Activated CD4-positive, alpha-beta memory T cell treated with anti-CD3 and anti-CD28 coated beads, Interleukin-2, amount 10 ng/mL, durations not matched to agents 7 days and 5 days (primary cell): ENCODE measurements at regions of chr19 and their contacts with region 1.

Region 1: GRCh38 chr19:18328340-18329034 is 5.6 kb upstream of the LSM4 start:
- DNase-seq: peak; percentile 92
- H3K4me3 Mint-ChIP-seq: peak overlapping the region; percentile 47
- H3K27ac Mint-ChIP-seq: peak overlapping the region; percentile 48
- H3K4me1 Mint-ChIP-seq: peaks cover 22% of the 10 kb centered on the region
- H3K27me3 Mint-ChIP-seq: no peaks in the 10 kb centered on the region

Region 2: DNA sequence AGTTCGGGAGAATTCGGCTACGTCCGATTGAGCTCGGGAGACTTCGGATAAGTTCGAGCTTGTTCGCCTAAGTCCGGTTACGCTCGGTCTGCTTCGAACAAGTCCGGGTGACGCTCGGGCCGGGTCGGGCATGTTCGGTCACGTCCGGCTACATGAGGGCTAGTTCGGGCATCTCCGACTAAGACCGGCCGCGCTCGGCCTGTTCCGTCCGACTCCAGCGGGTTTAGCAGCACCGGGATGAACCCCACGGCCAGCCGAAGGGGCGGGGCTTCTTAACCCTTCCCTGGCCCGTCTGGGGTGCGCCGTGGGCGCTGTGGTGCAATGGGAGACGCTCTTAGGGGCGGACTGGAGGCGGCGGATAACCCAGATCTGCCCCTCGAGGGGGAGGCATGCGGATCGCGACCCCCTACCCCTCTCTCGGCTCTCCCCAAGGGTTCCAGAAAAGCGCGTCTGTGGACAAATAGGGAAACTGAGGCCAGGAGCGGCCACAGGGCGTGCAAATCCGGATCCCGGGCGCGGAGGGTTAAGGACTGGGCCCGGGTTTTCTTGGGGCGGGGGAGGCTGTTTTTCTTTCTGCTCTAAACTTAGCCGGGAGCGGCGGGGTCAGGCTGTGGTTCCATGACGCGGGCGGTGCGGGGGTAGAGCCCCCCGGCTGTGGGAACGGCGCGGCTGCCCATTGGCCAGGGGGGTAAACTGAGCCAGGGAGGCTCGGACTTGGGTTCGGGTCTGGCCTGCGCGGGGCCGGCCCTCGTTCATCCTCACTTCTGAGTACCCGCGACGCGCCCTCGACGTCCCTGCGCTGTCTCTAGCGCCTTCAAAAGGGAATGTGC is 103.7 kb before region 1 on chr19:
- CTCF ChIA-PET with region 1: interaction called, 17 read pairs
- POLR2A ChIA-PET with region 1: no interaction called
- DNase-seq: peak; percentile 93
- H3K4me3 Mint-ChIP-seq: peak overlapping the region; percentile 75
- H3K27ac Mint-ChIP-seq: peak overlapping the region; percentile 47
- H3K4me1 Mint-ChIP-seq: peaks cover 18% of the 10 kb centered on the region
- H3K27me3 Mint-ChIP-seq: peaks cover 51% of the 10 kb centered on the region

Region 3: GRCh38 chr19:18274219-18274780 is 54.2 kb before region 1 on chr19 and contains the start of gene IQCN:
- CTCF ChIA-PET with region 1: interaction called, 263 read pairs
- POLR2A ChIA-PET with region 1: interaction called, 1,184 read pairs
- DNase-seq: peak; percentile 45
- H3K4me3 Mint-ChIP-seq: no peak within 1 kb of the TSS
- H3K27ac Mint-ChIP-seq: no peak within 1 kb of the TSS
- H3K4me1 Mint-ChIP-seq: peaks cover 36% of the 10 kb centered on the region
- H3K27me3 Mint-ChIP-seq: no peaks in the 10 kb centered on the region
- total RNA-seq, gene IQCN: 1.6 to 1.7 TPM

Region 4: DNA sequence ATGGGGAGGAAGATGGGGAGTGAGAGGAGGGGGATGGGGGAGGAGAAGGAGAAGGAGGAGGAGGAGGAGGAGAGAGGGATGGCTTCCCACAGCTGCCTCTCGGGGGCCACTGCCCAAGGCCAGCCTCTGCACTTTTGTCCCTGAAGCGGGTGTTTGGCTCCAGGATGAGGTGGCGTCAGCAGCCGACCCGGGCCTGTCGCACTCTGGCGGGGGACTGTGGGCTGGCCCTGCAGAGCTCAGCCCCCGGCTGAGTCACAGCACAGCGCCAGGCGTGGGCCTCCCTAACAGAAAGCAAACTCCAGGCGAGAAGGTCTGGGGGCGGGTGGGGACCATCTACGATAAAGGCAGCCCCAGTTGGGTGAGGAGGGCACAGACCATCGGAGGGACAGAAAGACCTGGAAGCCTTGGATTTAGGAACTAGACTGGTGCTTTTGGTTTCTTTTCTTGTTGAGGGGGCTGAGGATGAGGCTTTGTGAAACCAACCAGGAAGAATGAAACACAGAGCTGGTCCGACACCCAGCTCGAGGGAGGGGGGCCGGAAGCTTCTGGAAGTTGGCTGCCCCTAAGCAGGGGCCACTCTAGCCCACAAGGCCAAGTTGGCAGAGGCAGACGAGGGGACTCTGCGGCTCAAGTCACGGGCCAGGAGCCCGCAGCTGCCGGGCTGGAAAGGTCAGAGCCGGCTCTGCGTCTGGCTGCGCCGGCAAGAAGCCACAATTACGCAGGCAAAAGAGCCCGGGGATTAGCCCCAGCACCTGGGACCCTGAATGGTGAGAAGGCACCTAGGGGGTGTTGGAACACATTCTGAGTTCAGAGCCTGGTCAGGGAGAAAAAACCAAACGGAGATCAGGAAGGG is 23.8 kb before region 1 on chr19:
- CTCF ChIA-PET with region 1: interaction called, 24 read pairs
- POLR2A ChIA-PET with region 1: interaction called, 10 read pairs
- DNase-seq: peak; percentile 86
- H3K4me3 Mint-ChIP-seq: peak overlapping the region; percentile 93
- H3K27ac Mint-ChIP-seq: peak overlapping the region; percentile 94
- H3K4me1 Mint-ChIP-seq: peaks cover 53% of the 10 kb centered on the region
- H3K27me3 Mint-ChIP-seq: no peaks in the 10 kb centered on the region

Region 5: DNA sequence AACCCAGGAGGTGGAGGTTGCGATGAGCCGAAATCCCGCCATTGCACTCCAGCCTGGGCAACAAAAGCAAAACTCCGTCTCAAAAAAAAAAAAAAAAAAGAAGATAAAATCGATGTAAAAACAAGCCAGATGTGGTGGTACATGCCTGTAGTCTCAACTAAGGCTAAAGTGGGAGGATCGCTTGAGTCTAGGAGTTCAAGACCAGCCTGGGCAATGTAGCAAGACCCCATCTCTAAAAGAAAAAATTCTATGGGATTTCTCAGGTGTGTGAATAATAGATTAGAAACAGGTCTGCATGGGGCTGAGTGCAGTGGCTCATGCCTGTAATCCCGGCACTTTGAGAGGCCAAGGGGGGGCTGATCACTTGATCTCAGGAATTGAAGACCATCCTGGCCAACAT is 23.1 kb after region 1 on chr19:
- CTCF ChIA-PET with region 1: no interaction called
- POLR2A ChIA-PET with region 1: no interaction called
- DNase-seq: no peak
- H3K4me3 Mint-ChIP-seq: no peak overlapping the region
- H3K27ac Mint-ChIP-seq: no peak overlapping the region
- H3K4me1 Mint-ChIP-seq: no peaks in the 10 kb centered on the region
- H3K27me3 Mint-ChIP-seq: no peaks in the 10 kb centered on the region

Region 6: DNA sequence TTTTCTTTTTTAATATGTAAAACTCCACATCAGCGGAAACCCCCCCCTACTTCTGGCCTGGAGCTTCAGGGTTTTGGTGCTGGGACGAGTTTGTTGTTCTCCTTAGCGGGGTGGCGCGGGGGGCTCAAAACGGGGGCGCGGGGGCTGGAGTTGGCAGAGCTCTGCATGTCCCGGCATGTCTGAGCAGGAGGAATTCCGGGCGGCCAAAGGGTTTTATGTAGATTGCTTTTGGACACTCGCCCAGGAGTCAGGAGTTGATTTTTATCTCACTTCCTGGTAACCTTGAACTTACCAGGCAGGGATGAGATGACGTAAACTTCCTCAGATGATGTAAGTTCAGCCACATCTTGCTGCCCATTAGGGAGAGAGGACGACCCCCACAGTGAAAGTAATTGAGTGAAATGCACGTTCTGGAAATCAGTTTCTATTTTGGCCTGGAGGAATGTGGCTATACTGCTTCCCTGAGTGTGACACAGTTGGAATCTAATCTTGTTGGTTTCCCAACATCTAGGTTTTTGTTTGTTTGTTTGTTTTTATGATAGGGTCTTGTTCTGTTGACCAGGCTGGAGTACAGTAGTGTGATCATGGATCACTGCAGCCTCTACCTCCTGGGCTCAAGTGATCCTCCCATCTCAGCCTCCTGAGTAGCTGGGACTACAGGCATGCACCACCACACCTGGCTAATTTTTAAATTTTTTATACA is 36.5 kb after region 1 on chr19:
- CTCF ChIA-PET with region 1: interaction called, 11 read pairs
- POLR2A ChIA-PET with region 1: no interaction called
- DNase-seq: no peak
- H3K4me3 Mint-ChIP-seq: no peak overlapping the region
- H3K27ac Mint-ChIP-seq: no peak overlapping the region
- H3K4me1 Mint-ChIP-seq: peaks cover 16% of the 10 kb centered on the region
- H3K27me3 Mint-ChIP-seq: no peaks in the 10 kb centered on the region

Region 7: DNA sequence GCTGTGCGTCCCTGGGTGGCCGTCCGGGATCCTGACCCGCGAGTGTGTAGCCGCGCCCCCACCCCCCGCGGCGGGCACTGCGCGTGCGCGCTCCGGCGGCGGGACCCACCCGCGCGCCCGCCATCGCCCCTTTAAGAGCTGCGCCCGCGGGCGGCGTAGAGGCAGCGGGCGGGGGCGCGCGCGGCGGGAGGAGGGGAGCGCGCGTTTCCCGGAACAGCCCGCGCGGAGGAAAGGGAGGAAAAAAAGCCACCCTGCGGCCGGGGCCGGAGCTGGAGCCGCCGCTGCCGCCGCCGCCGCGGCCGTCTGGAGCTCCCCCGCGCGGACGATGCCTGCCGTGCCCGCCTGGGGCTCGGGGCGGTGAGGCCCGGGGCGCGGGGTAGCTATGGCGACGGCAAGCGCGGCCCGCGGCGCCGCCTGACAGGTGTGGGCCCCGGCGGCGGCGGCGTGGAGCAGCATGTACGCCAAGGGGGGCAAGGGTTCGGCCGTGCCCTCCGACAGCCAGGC is 90.8 kb after region 1 on chr19 and contains the start of gene SSBP4:
- CTCF ChIA-PET with region 1: interaction called, 16 read pairs
- POLR2A ChIA-PET with region 1: interaction called, 3 read pairs
- DNase-seq: peak; percentile 79
- H3K4me3 Mint-ChIP-seq: peak within 1 kb of the TSS; percentile 94
- H3K27ac Mint-ChIP-seq: peak within 1 kb of the TSS; percentile 91
- H3K4me1 Mint-ChIP-seq: peaks cover 84% of the 10 kb centered on the region
- H3K27me3 Mint-ChIP-seq: peaks cover 11% of the 10 kb centered on the region
- total RNA-seq, gene SSBP4: 140 to 153 TPM